ENCODE measurements at regions of chr3 and their contacts with region 1.

Region 1: GRCh38 chr3:100893590-100893989 is 99.6 kb downstream of the ABI3BP start:
- DNase-seq: peak in 5 of 7 donors; percentile 26 to 63 (median 44)
- H3K4me3 ChIP-seq: no peak overlapping the region
- H3K27ac ChIP-seq: no peak overlapping the region
- H3K4me1 ChIP-seq: no peaks in the 10 kb centered on the region
- H3K27me3 ChIP-seq: no peaks in the 10 kb centered on the region
- CTCF ChIP-seq: peak; percentile 19 to 85 (median 55)
- POLR2A ChIP-seq: no peak

Region 2: DNA sequence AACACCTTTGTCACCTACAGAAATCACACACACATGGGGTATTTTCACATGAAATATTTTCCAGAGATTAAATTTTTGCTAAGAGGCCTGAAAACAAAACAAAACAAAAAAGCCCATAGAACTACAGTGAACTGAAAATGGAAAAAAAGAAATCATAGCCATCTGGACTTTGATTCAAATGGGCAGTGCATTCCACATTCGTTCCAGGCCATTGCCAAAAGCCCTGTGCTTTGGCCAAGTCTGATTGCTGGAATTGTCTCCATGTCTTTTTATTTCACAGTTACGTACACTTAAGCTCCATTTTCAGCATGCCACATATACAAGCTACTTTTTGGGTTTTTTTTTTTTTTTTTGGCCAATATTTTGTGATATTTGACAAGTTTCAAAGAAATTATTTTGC is 137.1 kb before region 1 on chr3:
- intact Hi-C with region 1: no loop called
- DNase-seq: no peak
- H3K4me3 ChIP-seq: no peak overlapping the region
- H3K27ac ChIP-seq: no peak overlapping the region
- H3K4me1 ChIP-seq: peaks cover 5 to 7% of the 10 kb centered on the region in 2 donors
- H3K27me3 ChIP-seq: no peaks in the 10 kb centered on the region
- CTCF ChIP-seq: no peak
- POLR2A ChIP-seq: no peak

Region 3: GRCh38 chr3:101195951-101196713 is 302.5 kb after region 1 on chr3:
- intact Hi-C with region 1: loop called (anchors 5 to 10 kb)
- DNase-seq: peak in 2 of 7 donors; percentile 7 to 18
- H3K4me3 ChIP-seq: no peak overlapping the region
- H3K27ac ChIP-seq: no peak overlapping the region
- H3K4me1 ChIP-seq: peaks cover 0 to 11% of the 10 kb centered on the region in 2 donors
- H3K27me3 ChIP-seq: no peaks in the 10 kb centered on the region
- CTCF ChIP-seq: peak; percentile 37 to 76 (median 70)
- POLR2A ChIP-seq: no peak